ENCODE measurements at regions of chr3 and their contacts with region 1.

Region 1: GRCh38 chr3:123028233-123028828 is 768 bp upstream of the SEMA5B start:
- DNase-seq: peak; percentile 58
- H3K4me3 ChIP-seq: peak overlapping the region; percentile 37 to 62 (median 45)
- H3K27ac ChIP-seq: no peak overlapping the region
- H3K4me1 ChIP-seq: peaks cover 18% of the 10 kb centered on the region
- H3K27me3 ChIP-seq: peaks cover 7% of the 10 kb centered on the region
- CTCF ChIP-seq: peak; percentile 26 to 64

Region 2: DNA sequence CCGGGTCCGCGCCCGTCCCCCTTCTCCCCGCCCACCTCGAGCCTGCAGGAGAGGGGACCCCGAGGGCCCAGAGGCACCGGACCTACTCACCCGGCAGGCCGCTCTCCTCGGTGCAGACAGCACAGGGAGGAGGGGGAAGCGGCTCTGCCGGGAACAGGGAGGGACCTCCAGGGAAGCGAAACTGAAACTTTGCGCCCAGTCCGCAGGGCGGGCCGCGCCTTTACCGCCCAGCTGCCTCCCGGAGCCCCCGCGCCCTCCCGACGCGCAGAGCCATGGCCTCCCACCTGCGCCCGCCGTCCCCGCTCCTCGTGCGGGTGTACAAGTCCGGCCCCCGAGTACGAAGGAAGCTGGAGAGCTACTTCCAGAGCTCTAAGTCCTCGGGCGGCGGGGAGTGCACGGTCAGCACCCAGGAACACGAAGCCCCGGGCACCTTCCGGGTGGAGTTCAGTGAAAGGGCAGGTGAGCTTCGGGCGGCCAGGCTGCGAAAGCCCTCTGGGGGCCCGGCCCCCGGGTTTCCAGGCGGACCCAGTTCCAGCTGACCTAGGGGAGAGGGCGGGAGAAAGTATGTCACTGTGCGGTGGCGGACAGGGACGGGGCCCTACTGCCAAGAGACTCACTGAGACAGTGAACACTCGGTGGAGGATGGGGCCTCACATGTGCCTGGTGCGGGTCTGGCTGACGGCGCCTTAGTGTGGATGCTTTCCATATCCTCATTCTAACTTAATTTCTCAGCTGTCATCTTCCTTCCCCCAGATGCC is 464.0 kb before region 1 on chr3 and contains the starts of genes DTX3L and PARP9:
- CTCF ChIA-PET with region 1: no interaction called
- dilution Hi-C with region 1: no loop called
- in situ Hi-C with region 1: no loop called
- intact Hi-C with region 1: loop called (anchors 5 kb)
- DNase-seq: peak; percentile 77
- H3K4me3 ChIP-seq: peak within 1 kb of the TSS; percentile 87 to 93 (median 91)
- H3K27ac ChIP-seq: peak within 1 kb of the TSS; percentile 76
- H3K4me1 ChIP-seq: peaks cover 12% of the 10 kb centered on the region
- H3K27me3 ChIP-seq: no peaks in the 10 kb centered on the region
- CTCF ChIP-seq: no peak
- total RNA-seq, gene DTX3L: 10.7 to 15.6 TPM
- total RNA-seq, gene PARP9: 6.4 to 10.0 TPM

Region 3: GRCh38 chr3:122754929-122755328 is 273.4 kb before region 1 on chr3:
- CTCF ChIA-PET with region 1: no interaction called
- dilution Hi-C with region 1: no loop called
- in situ Hi-C with region 1: loop called (anchors 5 to 25 kb)
- intact Hi-C with region 1: loop called (anchors 1 kb)
- DNase-seq: peak; percentile 58
- H3K4me3 ChIP-seq: no peak overlapping the region
- H3K27ac ChIP-seq: no peak overlapping the region
- H3K4me1 ChIP-seq: peaks cover 3% of the 10 kb centered on the region
- H3K27me3 ChIP-seq: no peaks in the 10 kb centered on the region
- CTCF ChIP-seq: peak; percentile 93 to 98

Region 4: GRCh38 chr3:122882361-122882947 is 145.9 kb before region 1 on chr3:
- CTCF ChIA-PET with region 1: no interaction called
- dilution Hi-C with region 1: no loop called
- in situ Hi-C with region 1: no loop called
- intact Hi-C with region 1: no loop called
- DNase-seq: no peak
- H3K4me3 ChIP-seq: no peak overlapping the region
- H3K27ac ChIP-seq: no peak overlapping the region
- H3K4me1 ChIP-seq: no peaks in the 10 kb centered on the region
- H3K27me3 ChIP-seq: no peaks in the 10 kb centered on the region
- CTCF ChIP-seq: no peak

Region 5: GRCh38 chr3:122921791-122922651 is 106.3 kb before region 1 on chr3:
- CTCF ChIA-PET with region 1: interaction called, 50 read pairs
- dilution Hi-C with region 1: no loop called
- in situ Hi-C with region 1: no loop called
- intact Hi-C with region 1: no loop called
- DNase-seq: no peak
- H3K4me3 ChIP-seq: peak overlapping the region in 2 of 3 experiments; percentile 33 to 34
- H3K27ac ChIP-seq: no peak overlapping the region
- H3K4me1 ChIP-seq: peaks cover 9% of the 10 kb centered on the region
- H3K27me3 ChIP-seq: no peaks in the 10 kb centered on the region
- CTCF ChIP-seq: peak; percentile 25 to 55

Region 6: DNA sequence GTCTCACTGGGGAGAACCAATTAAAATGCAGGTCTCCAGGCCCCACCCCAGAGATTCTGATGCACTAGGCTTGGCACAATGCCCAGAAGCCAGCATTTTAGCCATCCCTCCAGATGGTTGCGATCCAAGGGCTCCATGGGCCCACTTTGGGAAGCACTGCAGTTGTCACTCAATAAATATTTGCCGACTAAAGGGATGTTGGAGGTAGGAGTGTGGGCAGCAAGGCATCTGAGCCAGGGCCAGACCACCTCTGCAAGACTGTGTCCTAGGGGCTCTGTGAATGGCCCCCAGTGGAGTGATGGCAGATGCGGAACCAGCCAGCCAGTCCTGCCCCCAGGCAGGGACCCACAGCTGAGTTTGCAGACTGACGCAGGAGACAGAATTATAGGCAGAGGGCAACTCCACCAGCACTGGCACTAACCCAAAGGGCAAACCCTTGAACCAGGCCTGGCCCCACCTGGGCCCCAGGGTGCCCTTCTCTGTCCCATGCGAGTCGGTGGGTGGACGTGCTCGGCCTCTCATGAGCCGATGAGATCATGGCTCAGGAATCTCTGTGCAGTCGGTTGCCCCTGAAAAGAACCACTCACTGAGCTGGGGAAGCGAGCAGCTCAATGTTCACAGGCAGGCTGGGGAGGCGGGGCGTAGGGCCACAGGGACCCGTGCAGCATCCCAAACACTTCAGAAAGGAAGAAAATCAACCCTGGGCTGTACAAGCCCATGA is 50.4 kb before region 1 on chr3:
- CTCF ChIA-PET with region 1: no interaction called
- dilution Hi-C with region 1: no loop called
- in situ Hi-C with region 1: no loop called
- intact Hi-C with region 1: no loop called
- DNase-seq: peak; percentile 53
- H3K4me3 ChIP-seq: no peak overlapping the region
- H3K27ac ChIP-seq: no peak overlapping the region
- H3K4me1 ChIP-seq: peaks cover 28% of the 10 kb centered on the region
- H3K27me3 ChIP-seq: no peaks in the 10 kb centered on the region
- CTCF ChIP-seq: no peak

Region 7: DNA sequence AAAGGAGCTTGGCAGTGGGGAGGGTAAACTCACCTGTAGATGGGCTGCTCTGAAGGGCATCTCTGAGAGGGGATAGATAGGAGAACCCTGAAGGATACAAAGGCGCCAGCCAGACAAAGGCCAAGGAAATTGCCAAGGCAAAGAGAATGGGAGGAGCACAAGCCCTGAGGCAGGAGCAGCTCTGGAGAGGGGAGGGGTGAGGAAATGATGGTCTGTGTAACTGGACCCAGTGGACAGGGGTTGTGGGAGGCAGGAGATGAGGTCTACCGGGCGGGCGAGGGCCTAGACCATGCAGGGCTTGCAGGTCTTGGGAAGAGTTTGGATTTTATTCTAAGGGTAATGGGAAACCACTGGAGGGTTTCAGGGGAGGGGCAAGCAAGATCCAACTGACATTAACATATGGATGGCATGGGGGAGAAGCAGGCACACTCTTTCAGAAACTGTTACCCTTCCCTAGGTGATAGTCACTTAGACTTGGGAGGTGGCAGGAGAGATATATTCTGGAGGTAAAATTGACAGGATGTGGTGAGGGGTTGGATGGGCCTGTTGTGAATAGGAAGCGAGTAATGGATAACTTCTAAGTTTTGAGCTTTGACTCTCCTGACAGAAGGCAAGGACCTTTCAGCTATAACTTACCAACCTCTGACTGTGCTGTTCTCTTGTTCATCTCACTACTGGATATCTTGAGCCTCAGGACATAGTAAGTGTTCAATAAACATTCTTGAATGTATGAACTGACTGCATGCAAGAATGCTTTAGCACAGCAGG is 36.4 kb after region 1 on chr3:
- CTCF ChIA-PET with region 1: no interaction called
- dilution Hi-C with region 1: loop called (anchors 5 kb)
- in situ Hi-C with region 1: no loop called
- intact Hi-C with region 1: no loop called
- DNase-seq: no peak
- H3K4me3 ChIP-seq: no peak overlapping the region
- H3K27ac ChIP-seq: no peak overlapping the region
- H3K4me1 ChIP-seq: peaks cover 27% of the 10 kb centered on the region
- H3K27me3 ChIP-seq: no peaks in the 10 kb centered on the region
- CTCF ChIP-seq: no peak

Region 8: DNA sequence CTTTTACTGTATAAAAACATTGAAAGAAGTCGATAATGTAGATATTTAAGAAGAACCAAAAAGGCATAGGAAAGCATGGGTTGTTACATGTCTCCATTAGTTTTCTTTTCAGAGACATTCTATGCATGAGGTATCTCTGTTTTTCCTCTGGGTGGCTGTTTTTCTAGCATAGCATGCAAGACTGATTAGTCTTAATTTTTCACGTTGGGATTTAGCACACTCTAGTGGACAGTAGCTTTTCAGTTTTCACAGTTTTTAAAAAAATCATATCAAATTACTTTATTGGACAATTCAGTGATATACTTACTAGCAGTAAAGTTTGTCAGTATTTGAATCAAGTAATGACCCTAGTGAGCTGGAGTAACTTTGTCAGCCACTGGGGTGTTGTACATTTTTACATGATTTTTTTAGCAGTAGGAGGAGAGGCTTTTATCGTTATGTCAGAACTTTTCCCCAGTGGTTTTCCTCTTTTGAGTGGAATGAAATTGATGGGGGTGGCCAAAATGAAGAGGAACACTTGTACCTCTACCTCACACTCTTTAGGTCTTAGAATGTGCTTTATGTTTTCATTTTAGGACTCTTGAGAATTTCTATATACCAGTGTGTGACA is 230.6 kb after region 1 on chr3:
- CTCF ChIA-PET with region 1: no interaction called
- dilution Hi-C with region 1: no loop called
- in situ Hi-C with region 1: no loop called
- intact Hi-C with region 1: loop called (anchors 1 kb)
- DNase-seq: peak; percentile 41
- H3K4me3 ChIP-seq: no peak overlapping the region
- H3K27ac ChIP-seq: no peak overlapping the region
- H3K4me1 ChIP-seq: peaks cover 4% of the 10 kb centered on the region
- H3K27me3 ChIP-seq: no peaks in the 10 kb centered on the region
- CTCF ChIP-seq: peak; percentile 39 to 61